Panc1 (cell line): ENCODE measurements at regions of chr18 and their contacts with region 1.

Region 1: DNA sequence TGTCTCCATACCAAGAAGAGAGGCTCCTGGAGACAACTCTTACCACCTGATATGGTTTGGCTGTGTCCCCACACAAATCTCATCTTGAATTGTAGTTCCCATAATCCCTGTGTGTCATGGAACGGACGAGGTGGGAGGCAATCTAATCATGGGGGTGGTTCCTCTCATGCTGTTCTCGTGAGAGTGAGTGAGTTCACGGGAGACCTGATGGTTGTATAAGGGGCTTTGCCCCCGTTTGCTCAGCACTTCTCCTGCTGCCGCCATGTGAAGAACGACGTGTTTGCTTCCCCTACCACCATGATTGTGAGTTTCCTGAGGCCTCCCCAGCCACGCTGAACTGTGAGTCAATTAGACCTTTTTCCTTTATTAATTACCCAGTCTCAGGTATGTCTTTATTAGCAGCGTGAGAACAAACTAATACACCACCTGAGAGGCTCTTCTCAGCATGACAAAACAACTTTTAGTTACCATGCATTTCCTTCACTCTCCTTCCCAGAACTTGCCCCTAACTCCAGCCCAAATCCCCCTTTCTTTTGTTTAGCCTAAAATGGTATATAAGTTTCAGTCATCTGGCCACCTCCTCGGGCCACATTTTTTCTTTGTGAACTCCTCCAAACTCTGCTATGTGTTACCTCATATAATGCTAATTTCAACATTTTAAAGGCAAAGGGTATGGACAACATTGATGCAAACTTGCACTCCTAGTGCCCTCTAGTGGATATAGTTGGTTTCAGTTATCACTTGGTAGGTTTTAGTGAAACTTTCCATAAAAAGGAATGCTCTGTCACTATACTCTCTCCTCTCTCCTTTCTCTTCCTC is 58.6 kb upstream of the SLC25A52 start:
- DNase-seq: peak; percentile 24
- ATAC-seq: peak; percentile 76
- H3K4me3 ChIP-seq: no peak overlapping the region
- H3K27ac ChIP-seq: no peak overlapping the region
- H3K4me1 ChIP-seq: no peaks in the 10 kb centered on the region
- H3K27me3 ChIP-seq: no peaks in the 10 kb centered on the region
- CTCF ChIP-seq: peak; percentile 67

Region 2: GRCh38 chr18:31129398-31130115 is 689.8 kb before region 1 on chr18:
- CTCF ChIA-PET with region 1: no interaction called
- POLR2A ChIA-PET with region 1: no interaction called
- in situ Hi-C with region 1: no loop called
- intact Hi-C with region 1: no loop called
- DNase-seq: no peak
- ATAC-seq: no peak
- H3K4me3 ChIP-seq: no peak overlapping the region
- H3K27ac ChIP-seq: no peak overlapping the region
- H3K4me1 ChIP-seq: no peaks in the 10 kb centered on the region
- H3K27me3 ChIP-seq: no peaks in the 10 kb centered on the region
- CTCF ChIP-seq: no peak

Region 3: GRCh38 chr18:31482051-31482450 is 337.3 kb before region 1 on chr18:
- CTCF ChIA-PET with region 1: no interaction called
- POLR2A ChIA-PET with region 1: no interaction called
- in situ Hi-C with region 1: no loop called
- intact Hi-C with region 1: no loop called
- DNase-seq: no peak
- ATAC-seq: no peak
- H3K4me3 ChIP-seq: no peak overlapping the region
- H3K27ac ChIP-seq: no peak overlapping the region
- H3K4me1 ChIP-seq: no peaks in the 10 kb centered on the region; the same call in 1 of the 2 replicates
- H3K27me3 ChIP-seq: no peaks in the 10 kb centered on the region
- CTCF ChIP-seq: no peak

Region 4: GRCh38 chr18:31555971-31556747 is 263.2 kb before region 1 on chr18:
- CTCF ChIA-PET with region 1: no interaction called
- POLR2A ChIA-PET with region 1: no interaction called
- in situ Hi-C with region 1: no loop called
- intact Hi-C with region 1: loop called (anchors 2 kb)
- DNase-seq: peak; percentile 42
- ATAC-seq: peak; percentile 82; the same call in 1 of the 2 replicates
- H3K4me3 ChIP-seq: no peak overlapping the region
- H3K27ac ChIP-seq: no peak overlapping the region
- H3K4me1 ChIP-seq: no peaks in the 10 kb centered on the region; the same call in 1 of the 2 replicates
- H3K27me3 ChIP-seq: no peaks in the 10 kb centered on the region
- CTCF ChIP-seq: peak; percentile 64; the same call in 1 of the 2 replicates

Region 5: DNA sequence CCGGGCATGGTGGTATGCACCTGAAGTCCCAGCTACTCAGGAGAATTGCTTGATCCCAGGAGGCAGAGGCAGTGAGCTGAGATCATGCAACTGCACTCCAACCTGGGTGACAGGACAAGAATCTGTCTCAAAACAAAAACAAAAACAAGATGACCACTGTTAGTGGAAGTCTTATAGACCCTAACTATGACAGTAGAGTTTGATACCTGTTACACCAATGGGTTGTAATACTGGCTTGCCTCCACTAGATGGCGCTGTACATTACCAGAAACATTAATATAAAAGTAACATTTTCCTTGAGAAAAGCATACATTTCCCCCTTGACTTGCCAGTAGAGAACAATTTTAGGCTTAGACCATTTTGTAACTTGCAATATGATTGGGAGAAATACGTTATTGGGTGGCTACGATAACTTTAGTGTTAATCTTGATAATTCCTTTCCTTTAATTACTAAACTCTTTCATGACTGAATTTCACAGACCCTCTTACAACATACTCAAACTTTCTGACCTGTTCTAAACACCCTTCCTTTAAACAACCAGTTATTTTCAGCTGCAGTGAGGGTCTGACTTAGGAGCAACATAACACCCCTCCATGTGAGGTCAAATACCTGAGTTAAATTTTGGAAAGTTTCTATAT is 78.1 kb before region 1 on chr18:
- CTCF ChIA-PET with region 1: no interaction called
- POLR2A ChIA-PET with region 1: no interaction called
- in situ Hi-C with region 1: no loop called
- intact Hi-C with region 1: loop called (anchors 1 kb)
- DNase-seq: no peak
- ATAC-seq: no peak; the same call in 1 of the 2 replicates
- H3K4me3 ChIP-seq: no peak overlapping the region
- H3K27ac ChIP-seq: no peak overlapping the region
- H3K4me1 ChIP-seq: no peaks in the 10 kb centered on the region
- H3K27me3 ChIP-seq: no peaks in the 10 kb centered on the region
- CTCF ChIP-seq: peak; percentile 76

Region 6: GRCh38 chr18:32026491-32027086 is 207.3 kb after region 1 on chr18:
- CTCF ChIA-PET with region 1: no interaction called
- POLR2A ChIA-PET with region 1: no interaction called
- in situ Hi-C with region 1: no loop called
- intact Hi-C with region 1: no loop called
- DNase-seq: no peak
- ATAC-seq: no peak
- H3K4me3 ChIP-seq: no peak overlapping the region
- H3K27ac ChIP-seq: no peak overlapping the region
- H3K4me1 ChIP-seq: no peaks in the 10 kb centered on the region
- H3K27me3 ChIP-seq: no peaks in the 10 kb centered on the region; the same call in 1 of the 2 replicates
- CTCF ChIP-seq: no peak